SK-N-SH (cell line): ENCODE measurements at regions of chr7 and their contacts with region 1.

Region 1: GRCh38 chr7:141533149-141533949 is 17.9 kb upstream of the AGK start:
- DNase-seq: peak; percentile 77
- H3K4me3 ChIP-seq: no peak overlapping the region; a peak in 1 of 4 replicates
- H3K27ac ChIP-seq: no peak overlapping the region
- H3K4me1 ChIP-seq: peaks cover 0 to 2% of the 10 kb centered on the region in 2 experiments; a peak in 1 of 4 replicates
- H3K27me3 ChIP-seq: no peaks in the 10 kb centered on the region; the same call in 1 of the 2 replicates
- CTCF ChIP-seq: peak; percentile 100
- EP300 ChIP-seq: no peak
- RAD21 ChIP-seq: peak; percentile 98

Region 2: GRCh38 chr7:141014524-141015395 is 518.6 kb before region 1 on chr7 and contains the start of gene MRPS33:
- CTCF ChIA-PET with region 1: interaction called, 33 read pairs
- POLR2A ChIA-PET with region 1: interaction called, 5 read pairs
- DNase-seq: peak; percentile 96
- H3K4me3 ChIP-seq: peak within 1 kb of the TSS; percentile 72 to 96
- H3K27ac ChIP-seq: peak within 1 kb of the TSS; percentile 78 to 93
- H3K4me1 ChIP-seq: peaks cover 6 to 16% of the 10 kb centered on the region in 2 experiments; a peak in 3 of 4 replicates
- H3K27me3 ChIP-seq: no peaks in the 10 kb centered on the region
- CTCF ChIP-seq: peak; percentile 86
- EP300 ChIP-seq: no peak; a peak in 2 of 4 replicates
- RAD21 ChIP-seq: no peak; the same call in 1 of the 2 replicates
- polyA plus RNA-seq, gene MRPS33: 88.8 and 95.5 TPM in 2 replicates

Region 3: GRCh38 chr7:141053626-141054025 is 479.7 kb before region 1 on chr7:
- CTCF ChIA-PET with region 1: no interaction called
- POLR2A ChIA-PET with region 1: no interaction called
- DNase-seq: no peak
- H3K4me3 ChIP-seq: no peak overlapping the region
- H3K27ac ChIP-seq: no peak overlapping the region
- H3K4me1 ChIP-seq: no peaks in the 10 kb centered on the region
- H3K27me3 ChIP-seq: no peaks in the 10 kb centered on the region
- CTCF ChIP-seq: no peak
- EP300 ChIP-seq: no peak
- RAD21 ChIP-seq: no peak

Region 4: DNA sequence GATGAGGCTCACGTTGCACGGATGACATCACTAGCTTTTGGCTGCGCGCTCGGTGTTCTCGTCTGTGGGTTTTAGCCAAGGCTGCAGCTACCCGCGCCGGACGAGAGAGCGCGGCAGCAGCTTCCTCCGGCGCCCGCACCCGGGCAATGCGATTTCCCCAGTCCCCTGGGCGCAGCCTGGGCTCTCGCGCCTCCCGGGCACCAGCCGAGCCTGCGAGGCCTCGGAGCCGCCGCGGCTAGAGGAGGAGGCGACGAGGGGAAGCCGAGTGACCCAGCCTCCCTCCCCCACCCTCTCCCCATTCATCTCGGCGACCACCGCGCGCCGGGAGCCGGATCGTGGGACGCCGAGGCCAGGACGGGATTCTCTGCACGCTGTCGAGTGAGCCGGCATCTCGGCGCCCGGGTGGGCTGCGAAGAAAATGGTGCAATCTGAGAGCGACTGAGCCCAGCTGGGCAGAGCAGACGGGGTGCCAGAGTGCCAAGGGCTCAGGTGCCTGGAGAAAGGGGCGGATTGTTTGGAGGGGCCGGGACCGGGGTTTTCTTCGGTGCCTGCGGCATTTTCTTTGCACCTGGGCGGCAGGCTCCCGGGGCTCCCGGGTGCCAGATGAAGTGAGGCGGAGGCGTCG is 460.7 kb before region 1 on chr7:
- CTCF ChIA-PET with region 1: interaction called, 68 read pairs
- POLR2A ChIA-PET with region 1: interaction called, 5 read pairs
- DNase-seq: peak; percentile 84
- H3K4me3 ChIP-seq: peak overlapping the region; percentile 63 to 64
- H3K27ac ChIP-seq: peak overlapping the region in 1 of 2 experiments; percentile 67; a peak in 1 of 4 replicates
- H3K4me1 ChIP-seq: peaks cover 4 to 28% of the 10 kb centered on the region in 2 experiments; a peak in 2 of 4 replicates
- H3K27me3 ChIP-seq: peaks cover 38% of the 10 kb centered on the region
- CTCF ChIP-seq: no peak
- EP300 ChIP-seq: no peak
- RAD21 ChIP-seq: peak; percentile 13; the same call in 1 of the 2 replicates

Region 5: GRCh38 chr7:141511676-141512396 is 21.5 kb before region 1 on chr7:
- CTCF ChIA-PET with region 1: interaction called, 38 read pairs
- POLR2A ChIA-PET with region 1: no interaction called
- DNase-seq: no peak
- H3K4me3 ChIP-seq: no peak overlapping the region
- H3K27ac ChIP-seq: no peak overlapping the region
- H3K4me1 ChIP-seq: no peaks in the 10 kb centered on the region
- H3K27me3 ChIP-seq: no peaks in the 10 kb centered on the region
- CTCF ChIP-seq: no peak
- EP300 ChIP-seq: no peak
- RAD21 ChIP-seq: no peak

Region 6: DNA sequence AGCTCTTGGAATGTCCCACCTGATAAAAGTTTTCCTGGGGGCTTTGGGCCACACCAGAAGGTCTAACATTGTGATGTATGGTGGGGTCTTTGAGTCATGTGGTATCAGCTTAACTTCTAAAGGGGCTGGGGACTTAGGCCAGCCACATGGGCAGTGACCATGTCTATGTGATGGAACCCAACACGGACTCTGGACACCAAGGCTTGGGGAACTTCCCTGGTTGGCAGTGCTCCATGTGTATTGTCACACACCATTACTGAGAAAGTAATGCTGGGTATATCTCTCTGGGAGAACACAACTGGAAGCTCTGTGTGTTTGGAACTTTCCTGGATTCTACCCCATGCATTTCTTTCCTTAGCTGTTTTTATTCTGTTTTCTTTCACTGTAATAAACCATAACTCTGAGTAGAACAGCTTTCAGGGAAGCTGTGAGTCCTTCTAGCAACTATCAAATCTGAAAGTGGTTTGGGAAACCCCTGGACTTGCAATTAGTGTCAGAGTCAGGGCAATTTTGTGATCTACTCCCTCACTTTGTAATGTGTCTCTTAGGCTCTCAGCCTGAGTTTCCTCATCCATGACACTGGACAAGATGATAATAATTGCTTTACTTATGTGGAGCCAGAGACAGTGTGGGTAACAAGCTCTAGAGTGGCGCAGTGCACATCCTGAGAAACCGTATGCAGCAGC is 10.5 kb before region 1 on chr7:
- CTCF ChIA-PET with region 1: interaction called, 44 read pairs
- POLR2A ChIA-PET with region 1: no interaction called
- DNase-seq: no peak
- H3K4me3 ChIP-seq: no peak overlapping the region
- H3K27ac ChIP-seq: no peak overlapping the region
- H3K4me1 ChIP-seq: no peaks in the 10 kb centered on the region
- H3K27me3 ChIP-seq: no peaks in the 10 kb centered on the region
- CTCF ChIP-seq: no peak
- EP300 ChIP-seq: no peak
- RAD21 ChIP-seq: no peak

Region 7: DNA sequence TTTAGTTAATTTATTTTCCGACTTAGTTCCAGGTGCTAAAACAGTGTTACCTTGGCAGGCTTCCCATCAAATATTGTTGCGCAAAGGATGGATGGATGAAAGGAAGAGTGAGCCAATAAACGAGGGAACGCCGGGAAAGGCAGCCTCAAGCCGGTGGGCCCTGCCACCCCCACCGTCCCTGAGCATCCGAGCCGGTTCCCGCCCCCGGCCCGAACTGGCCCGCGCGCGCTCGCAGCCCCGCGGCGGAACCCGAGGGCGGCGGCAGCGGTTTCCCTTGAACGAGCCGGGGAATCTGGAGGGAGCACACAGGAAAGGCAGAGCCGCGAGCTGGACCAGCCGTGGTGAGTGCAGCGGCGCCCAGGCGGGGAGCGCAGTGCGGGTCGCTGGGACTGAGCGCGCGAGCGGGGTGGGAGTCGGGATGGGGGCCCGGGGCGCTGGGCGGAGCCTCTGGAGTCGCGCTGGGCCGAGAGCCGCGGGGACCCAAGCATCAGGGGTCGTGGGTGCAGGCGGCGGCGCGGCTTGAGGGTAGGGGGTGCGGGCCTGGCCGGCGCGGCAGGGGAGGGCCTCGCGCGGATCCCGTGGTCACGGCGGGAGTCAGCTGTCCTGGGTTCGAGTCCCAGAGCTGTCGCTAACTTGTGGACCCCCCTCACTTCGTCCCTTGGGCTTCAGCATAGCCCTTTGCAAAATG is 17.9 kb after region 1 on chr7 and contains the start of gene AGK:
- CTCF ChIA-PET with region 1: interaction called, 53 read pairs
- POLR2A ChIA-PET with region 1: interaction called, 3 read pairs
- DNase-seq: peak; percentile 98
- H3K4me3 ChIP-seq: peak within 1 kb of the TSS; percentile 76 to 84
- H3K27ac ChIP-seq: peak within 1 kb of the TSS; percentile 25 to 84; a peak in 3 of 4 replicates
- H3K4me1 ChIP-seq: peaks cover 0 to 16% of the 10 kb centered on the region in 2 experiments; a peak in 3 of 4 replicates
- H3K27me3 ChIP-seq: no peaks in the 10 kb centered on the region
- CTCF ChIP-seq: no peak
- EP300 ChIP-seq: peak in 1 of 2 experiments; percentile 42; a peak in 1 of 4 replicates
- RAD21 ChIP-seq: no peak
- polyA plus RNA-seq, gene AGK: 45.7 and 67.0 TPM in 2 replicates